ENCODE measurements at regions of chr10 and their contacts with region 1.

Region 1: DNA sequence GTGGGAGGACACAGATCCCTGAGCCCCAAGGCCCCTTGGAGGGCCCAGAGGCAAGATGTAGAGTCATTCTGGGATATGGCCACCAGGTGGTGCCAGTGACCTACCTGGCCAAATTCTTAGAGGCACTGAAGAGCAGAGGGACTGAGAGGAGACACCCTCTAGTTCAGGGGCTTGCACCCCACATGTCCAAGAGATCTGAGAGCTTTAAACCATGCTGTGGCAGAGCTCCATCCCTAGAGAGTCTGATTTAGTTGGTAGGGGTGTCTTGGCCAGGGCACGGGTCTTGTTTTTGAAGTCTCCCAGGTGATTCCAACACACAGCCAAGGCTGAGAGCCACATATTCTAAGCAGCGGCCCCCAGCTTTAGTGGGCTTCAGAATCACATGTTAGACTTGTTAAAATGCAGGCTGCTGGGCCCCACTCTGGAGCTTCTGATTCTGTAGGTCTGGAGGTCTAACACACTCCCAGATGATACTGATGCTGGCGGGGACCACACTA is 52.5 kb downstream of the PRF1 start:
- DNase-seq: peak; percentile 75
- H3K4me3 ChIP-seq: no peak overlapping the region
- H3K27ac ChIP-seq: no peak overlapping the region
- H3K4me1 ChIP-seq: peaks cover 4% of the 10 kb centered on the region
- CTCF ChIP-seq: peak; percentile 93

Region 2: GRCh38 chr10:70815504-70816219 is 265.7 kb after region 1 on chr10 and contains the start of gene SGPL1:
- CTCF ChIA-PET with region 1: no interaction called
- POLR2A ChIA-PET with region 1: no interaction called
- intact Hi-C with region 1: loop called (anchors 2 kb)
- DNase-seq: peak; percentile 90
- H3K4me3 ChIP-seq: peak within 1 kb of the TSS; percentile 78
- H3K27ac ChIP-seq: no peak within 1 kb of the TSS
- H3K4me1 ChIP-seq: peaks cover 4% of the 10 kb centered on the region
- CTCF ChIP-seq: peak; percentile 92
- total RNA-seq, gene SGPL1: 11.7 and 14.2 TPM in 2 replicates